Spleen (tissue), 13 donors: ENCODE measurements at regions of chr14 and their contacts with region 1.

Region 1: GRCh38 chr14:104078031-104078455 is 7.5 kb upstream of the ASPG start:
- DNase-seq: peak; percentile 94
- H3K4me3 ChIP-seq: no peak overlapping the region
- H3K27ac ChIP-seq: peak overlapping the region in 2 of 8 donors; percentile 2 to 12
- H3K4me1 ChIP-seq: peaks cover 6 to 11% (median 7%) of the 10 kb centered on the region in 6 donors
- H3K27me3 ChIP-seq: peaks cover 0 to 15% (median 0%) of the 10 kb centered on the region in 7 donors
- CTCF ChIP-seq: peak; percentile 96 to 99 (median 98)
- POLR2A ChIP-seq: no peak

Region 2: DNA sequence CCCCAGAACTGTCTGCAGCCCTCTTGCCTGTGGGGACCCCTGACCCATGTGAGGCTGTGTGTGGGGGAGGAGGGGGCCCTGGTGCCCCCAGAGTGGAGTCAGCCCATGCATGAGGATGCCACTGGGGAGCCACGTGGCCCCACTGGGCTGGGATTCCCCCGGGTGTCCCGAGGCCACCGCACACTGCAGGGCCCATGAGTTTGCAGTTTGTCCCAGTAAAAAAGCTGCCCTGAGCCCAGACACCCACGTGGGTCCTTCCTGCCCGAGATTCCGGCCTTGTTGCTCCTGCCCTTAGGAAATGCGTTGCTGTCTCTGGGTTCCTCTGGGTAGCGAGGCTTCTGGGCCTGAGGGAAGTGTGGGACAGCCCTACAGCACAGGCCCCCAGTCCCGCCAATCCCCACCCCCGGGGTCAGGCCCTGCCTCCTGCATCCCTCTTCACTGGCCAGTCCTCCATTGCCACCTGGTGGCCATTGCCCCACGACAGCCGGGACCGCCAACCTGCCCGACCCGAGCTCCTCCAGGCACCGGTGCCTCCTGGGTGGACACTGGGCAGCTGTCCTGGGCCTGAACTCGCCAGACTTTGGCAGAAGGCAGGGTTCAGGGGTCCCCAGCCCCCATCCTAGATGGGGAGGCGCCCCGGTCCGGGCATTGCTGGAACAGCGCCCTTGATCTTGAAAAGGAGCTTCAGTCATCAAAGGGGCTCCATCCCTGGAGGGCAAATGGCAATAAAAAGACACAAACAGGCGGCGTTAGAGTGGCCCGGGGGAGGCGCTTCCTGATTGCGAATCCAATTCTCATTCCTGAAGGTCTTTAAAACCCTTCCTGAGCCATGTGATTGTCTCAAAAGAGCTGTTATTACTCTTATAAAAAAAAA is 485.9 kb after region 1 on chr14:
- intact Hi-C with region 1: loop called (anchors 10 kb)
- DNase-seq: peak; percentile 93
- H3K4me3 ChIP-seq: peak overlapping the region in 1 of 8 donors; percentile 18
- H3K27ac ChIP-seq: peak overlapping the region in 5 of 8 donors; percentile 38 to 63 (median 44)
- H3K4me1 ChIP-seq: peaks cover 10 to 22% (median 18%) of the 10 kb centered on the region in 6 donors
- H3K27me3 ChIP-seq: peaks cover 0 to 58% (median 23%) of the 10 kb centered on the region in 7 donors
- CTCF ChIP-seq: peak; percentile 65 to 96 (median 83)
- POLR2A ChIP-seq: no peak

Region 3: DNA sequence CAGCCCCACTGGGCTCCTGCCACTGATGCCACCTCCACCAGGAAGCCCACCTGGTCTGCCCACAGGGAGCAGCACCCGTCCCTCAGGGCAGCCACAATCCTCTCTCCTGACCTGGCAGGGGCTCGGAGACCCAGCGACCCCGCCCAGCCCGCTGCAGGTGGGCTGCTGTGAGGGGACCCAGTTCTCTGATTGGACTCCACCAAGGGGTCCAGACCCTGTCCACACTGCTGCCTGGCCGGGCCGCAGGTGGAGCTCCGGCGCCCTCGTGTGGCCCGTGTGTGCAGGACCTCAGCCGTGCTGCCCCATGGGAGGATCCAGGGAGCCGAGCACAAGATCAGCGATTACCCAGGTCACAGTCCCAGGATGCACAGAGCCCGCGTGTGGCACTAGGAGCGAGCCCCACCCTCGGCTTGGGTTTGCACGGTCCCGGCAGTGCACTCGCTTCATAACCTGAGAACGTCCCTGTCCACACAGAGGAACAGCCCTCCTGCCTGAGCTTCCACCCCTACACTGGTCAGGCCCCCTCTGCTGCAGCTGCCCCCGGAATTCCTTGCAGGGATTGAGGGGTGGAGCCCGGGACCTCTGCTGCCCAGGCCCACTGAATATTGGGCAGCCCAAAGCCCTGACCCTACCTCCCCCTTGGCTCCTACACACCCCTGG is 562.0 kb after region 1 on chr14:
- intact Hi-C with region 1: loop called (anchors 10 kb)
- DNase-seq: peak; percentile 86
- H3K4me3 ChIP-seq: no peak overlapping the region
- H3K27ac ChIP-seq: no peak overlapping the region
- H3K4me1 ChIP-seq: peaks cover 4 to 41% (median 22%) of the 10 kb centered on the region in 6 donors
- H3K27me3 ChIP-seq: peaks cover 0 to 28% (median 0%) of the 10 kb centered on the region in 7 donors
- CTCF ChIP-seq: peak; percentile 63 to 95 (median 87)
- POLR2A ChIP-seq: no peak